CD4-positive, alpha-beta T cell (primary cell): ENCODE measurements at regions of chr15 and their contacts with region 1.

Region 1: GRCh38 chr15:58684036-58684710 is 65.3 kb downstream of the ADAM10 start:
- DNase-seq: no peak
- ATAC-seq: no peak
- H3K4me3 ChIP-seq: no peak overlapping the region
- H3K4me3 Mint-ChIP-seq: no peak overlapping the region
- H3K27ac ChIP-seq: no peak overlapping the region
- H3K27ac Mint-ChIP-seq: peak overlapping the region; percentile 2
- H3K4me1 ChIP-seq: peaks cover 2% of the 10 kb centered on the region
- H3K4me1 Mint-ChIP-seq: peaks cover 28% of the 10 kb centered on the region
- H3K27me3 ChIP-seq: no peaks in the 10 kb centered on the region
- H3K27me3 Mint-ChIP-seq: no peaks in the 10 kb centered on the region
- CTCF ChIP-seq: no peak

Region 2: DNA sequence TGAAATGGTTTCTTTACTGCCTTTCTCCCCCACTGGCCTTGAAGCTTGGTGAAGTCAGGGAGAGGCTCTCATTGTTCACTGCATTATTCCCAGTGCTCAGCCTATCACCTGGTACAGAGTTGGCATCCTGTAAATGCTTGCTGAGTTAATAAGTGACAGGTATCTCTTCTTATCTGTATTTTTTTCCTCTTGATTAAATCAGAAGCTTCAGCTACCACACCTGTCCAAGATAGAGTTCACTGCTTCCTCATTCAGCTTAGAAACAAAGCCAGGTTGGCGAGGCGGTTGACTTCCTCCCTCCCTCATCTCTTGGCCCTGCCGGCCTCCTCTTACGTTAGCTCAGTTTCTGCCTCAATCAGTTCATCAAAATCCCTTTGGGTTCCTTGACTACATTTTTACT is 109.5 kb before region 1 on chr15:
- CTCF ChIA-PET with region 1: no interaction called
- POLR2A ChIA-PET with region 1: no interaction called
- intact Hi-C with region 1: no loop called
- DNase-seq: no peak
- ATAC-seq: no peak
- H3K4me3 ChIP-seq: no peak overlapping the region
- H3K4me3 Mint-ChIP-seq: no peak overlapping the region
- H3K27ac ChIP-seq: no peak overlapping the region
- H3K27ac Mint-ChIP-seq: no peak overlapping the region
- H3K4me1 ChIP-seq: peaks cover 3% of the 10 kb centered on the region
- H3K4me1 Mint-ChIP-seq: peaks cover 7% of the 10 kb centered on the region
- H3K27me3 ChIP-seq: no peaks in the 10 kb centered on the region
- H3K27me3 Mint-ChIP-seq: no peaks in the 10 kb centered on the region
- CTCF ChIP-seq: no peak

Region 3: GRCh38 chr15:58793862-58794261 is 109.7 kb after region 1 on chr15:
- CTCF ChIA-PET with region 1: no interaction called
- POLR2A ChIA-PET with region 1: no interaction called
- intact Hi-C with region 1: loop called in 1 of 2 experiments (anchors 10 kb)
- DNase-seq: no peak
- ATAC-seq: no peak
- H3K4me3 ChIP-seq: no peak overlapping the region
- H3K4me3 Mint-ChIP-seq: no peak overlapping the region
- H3K27ac ChIP-seq: no peak overlapping the region
- H3K27ac Mint-ChIP-seq: no peak overlapping the region
- H3K4me1 ChIP-seq: no peaks in the 10 kb centered on the region
- H3K4me1 Mint-ChIP-seq: peaks cover 11% of the 10 kb centered on the region
- H3K27me3 ChIP-seq: no peaks in the 10 kb centered on the region
- H3K27me3 Mint-ChIP-seq: no peaks in the 10 kb centered on the region
- CTCF ChIP-seq: no peak